Natural killer cell (primary cell): ENCODE measurements at regions of chr1 and their contacts with region 1.

Region 1: DNA sequence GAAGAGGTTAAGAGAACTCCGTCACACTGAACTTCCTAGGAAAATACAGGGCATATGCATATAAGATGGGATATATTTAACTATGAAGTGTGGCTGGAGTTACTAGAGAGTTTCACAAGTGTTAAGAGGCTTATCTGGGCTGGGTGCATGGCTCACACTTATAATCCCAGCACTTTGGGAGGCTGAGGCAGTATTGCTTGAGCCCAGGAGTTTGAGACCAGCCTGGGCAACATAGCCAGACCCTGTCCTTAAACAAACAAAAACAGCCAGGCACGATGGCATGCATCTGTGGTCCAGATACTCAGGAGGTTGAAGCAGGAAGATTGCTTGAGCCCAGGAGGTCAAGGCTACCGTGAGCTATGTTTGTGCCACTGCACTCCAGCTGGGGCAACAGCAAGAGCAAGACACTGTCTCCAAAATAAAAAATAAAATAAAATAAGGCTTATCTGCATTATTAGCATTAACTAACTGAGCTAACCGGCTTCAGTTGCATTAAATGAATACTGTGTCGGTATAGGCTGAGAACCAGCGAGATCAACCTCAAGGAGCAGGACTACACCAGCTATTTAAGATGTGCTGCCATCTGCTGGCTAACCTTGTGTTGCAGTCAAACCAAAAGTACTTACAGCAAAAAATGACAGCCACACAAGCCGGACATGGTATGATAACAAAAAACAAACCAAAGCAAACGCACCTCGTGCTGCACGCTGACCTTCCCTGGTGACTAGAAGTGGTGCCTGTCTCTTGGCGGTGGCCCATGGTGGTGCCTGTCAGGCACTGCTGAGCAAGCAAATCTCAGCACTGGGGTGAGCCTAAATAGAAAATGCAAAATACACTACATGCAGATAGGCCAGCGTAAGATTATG is 19.7 kb upstream of the RBBP5 start:
- DNase-seq: peak; percentile 64 to 88
- ATAC-seq: peak; percentile 90 to 96 (median 90)
- H3K4me3 ChIP-seq: no peak overlapping the region
- H3K4me3 Mint-ChIP-seq: peak overlapping the region; percentile 17
- H3K27ac ChIP-seq: no peak overlapping the region
- H3K27ac Mint-ChIP-seq: peak overlapping the region in 1 of 2 donors; percentile 42
- H3K4me1 ChIP-seq: peaks cover 13% of the 10 kb centered on the region
- H3K4me1 Mint-ChIP-seq: peaks cover 6 to 11% of the 10 kb centered on the region in 2 donors
- H3K27me3 ChIP-seq: no peaks in the 10 kb centered on the region
- H3K27me3 Mint-ChIP-seq: no peaks in the 10 kb centered on the region
- CTCF ChIP-seq: peak; percentile 74

Region 2: DNA sequence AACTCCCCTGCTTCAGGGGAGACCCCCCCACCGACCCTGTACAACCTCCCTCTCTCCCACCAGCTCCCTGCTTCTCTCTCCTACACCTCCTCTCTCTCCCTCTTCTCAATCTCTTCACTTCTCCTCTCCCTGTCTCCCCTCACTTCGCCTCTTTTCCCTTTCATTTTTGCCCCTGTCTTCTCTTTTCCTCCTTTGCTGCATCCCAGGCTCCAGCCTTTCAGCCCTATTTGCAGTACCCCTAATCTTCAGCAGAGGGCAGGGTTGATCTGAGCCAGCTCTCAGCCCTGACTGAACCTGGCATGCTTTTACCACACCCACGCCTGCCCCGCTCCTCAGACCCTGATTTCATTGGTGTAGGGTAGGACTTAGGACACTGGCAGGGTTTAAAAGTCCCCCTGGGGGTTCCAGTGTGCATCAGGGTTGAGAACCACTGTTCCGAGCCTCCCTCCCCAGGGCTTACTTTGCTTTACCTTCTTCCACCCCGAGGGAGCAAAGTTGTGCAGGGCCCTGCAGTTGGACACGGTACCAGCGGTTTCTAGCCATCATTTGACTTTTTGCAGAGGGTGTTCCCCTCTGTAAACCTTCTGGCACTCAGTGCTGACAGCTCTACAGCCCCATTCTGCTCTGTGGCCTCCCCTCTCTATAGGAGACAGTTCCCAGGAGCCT is 165.8 kb before region 1 on chr1:
- intact Hi-C with region 1: loop called (anchors 1 kb)
- DNase-seq: peak in 1 of 2 donors; percentile 68
- ATAC-seq: peak; percentile 62 to 82 (median 69)
- H3K4me3 ChIP-seq: no peak overlapping the region
- H3K4me3 Mint-ChIP-seq: no peak overlapping the region
- H3K27ac ChIP-seq: no peak overlapping the region
- H3K27ac Mint-ChIP-seq: no peak overlapping the region
- H3K4me1 ChIP-seq: peaks cover 8% of the 10 kb centered on the region
- H3K4me1 Mint-ChIP-seq: no peaks in the 10 kb centered on the region
- H3K27me3 ChIP-seq: no peaks in the 10 kb centered on the region
- H3K27me3 Mint-ChIP-seq: peaks cover 6 to 34% of the 10 kb centered on the region in 2 donors
- CTCF ChIP-seq: peak; percentile 62

Region 3: GRCh38 chr1:205183676-205184335 is 42.3 kb after region 1 on chr1:
- intact Hi-C with region 1: no loop called
- DNase-seq: no peak
- ATAC-seq: no peak
- H3K4me3 ChIP-seq: no peak overlapping the region
- H3K4me3 Mint-ChIP-seq: no peak overlapping the region
- H3K27ac ChIP-seq: no peak overlapping the region
- H3K27ac Mint-ChIP-seq: peak overlapping the region in 1 of 2 donors; percentile 6
- H3K4me1 ChIP-seq: peaks cover 3% of the 10 kb centered on the region
- H3K4me1 Mint-ChIP-seq: peaks cover 15 to 40% of the 10 kb centered on the region in 2 donors
- H3K27me3 ChIP-seq: no peaks in the 10 kb centered on the region
- H3K27me3 Mint-ChIP-seq: no peaks in the 10 kb centered on the region
- CTCF ChIP-seq: no peak

Region 4: DNA sequence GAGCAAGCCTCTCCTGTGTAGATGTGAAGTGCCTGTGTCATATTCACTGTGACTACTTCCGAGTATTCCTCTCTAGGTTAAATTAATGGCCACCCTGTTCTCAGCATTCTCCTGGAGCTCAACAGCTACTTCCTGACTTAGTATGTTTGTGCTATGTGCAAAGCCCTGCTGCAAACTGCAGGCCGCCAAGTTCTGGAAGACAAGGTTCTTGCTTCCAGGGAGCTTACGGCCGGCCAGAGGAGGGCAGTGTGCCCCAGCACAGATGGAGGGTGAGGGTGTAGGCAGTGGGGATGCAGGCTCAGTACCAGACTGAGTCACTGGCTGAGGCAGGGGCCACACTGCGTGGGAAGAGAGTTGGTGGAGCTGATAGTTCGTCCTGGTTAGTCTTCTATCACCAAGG is 447.2 kb after region 1 on chr1:
- intact Hi-C with region 1: no loop called
- DNase-seq: peak in 1 of 2 donors; percentile 19
- ATAC-seq: no peak
- H3K4me3 ChIP-seq: no peak overlapping the region
- H3K4me3 Mint-ChIP-seq: no peak overlapping the region
- H3K27ac ChIP-seq: no peak overlapping the region
- H3K27ac Mint-ChIP-seq: no peak overlapping the region
- H3K4me1 ChIP-seq: peaks cover 27% of the 10 kb centered on the region
- H3K4me1 Mint-ChIP-seq: peaks cover 7 to 8% of the 10 kb centered on the region in 2 donors
- H3K27me3 ChIP-seq: no peaks in the 10 kb centered on the region
- H3K27me3 Mint-ChIP-seq: peaks cover 0 to 7% of the 10 kb centered on the region in 2 donors
- CTCF ChIP-seq: no peak